Activated CD4-positive, alpha-beta T cell treated with anti-CD3 and anti-CD28 coated beads, Interleukin-2, amount 10 ng/mL, durations not matched to agents 24 days and 14 days (primary cell): ENCODE measurements at regions of chr11 and their contacts with region 1.

Region 1: DNA sequence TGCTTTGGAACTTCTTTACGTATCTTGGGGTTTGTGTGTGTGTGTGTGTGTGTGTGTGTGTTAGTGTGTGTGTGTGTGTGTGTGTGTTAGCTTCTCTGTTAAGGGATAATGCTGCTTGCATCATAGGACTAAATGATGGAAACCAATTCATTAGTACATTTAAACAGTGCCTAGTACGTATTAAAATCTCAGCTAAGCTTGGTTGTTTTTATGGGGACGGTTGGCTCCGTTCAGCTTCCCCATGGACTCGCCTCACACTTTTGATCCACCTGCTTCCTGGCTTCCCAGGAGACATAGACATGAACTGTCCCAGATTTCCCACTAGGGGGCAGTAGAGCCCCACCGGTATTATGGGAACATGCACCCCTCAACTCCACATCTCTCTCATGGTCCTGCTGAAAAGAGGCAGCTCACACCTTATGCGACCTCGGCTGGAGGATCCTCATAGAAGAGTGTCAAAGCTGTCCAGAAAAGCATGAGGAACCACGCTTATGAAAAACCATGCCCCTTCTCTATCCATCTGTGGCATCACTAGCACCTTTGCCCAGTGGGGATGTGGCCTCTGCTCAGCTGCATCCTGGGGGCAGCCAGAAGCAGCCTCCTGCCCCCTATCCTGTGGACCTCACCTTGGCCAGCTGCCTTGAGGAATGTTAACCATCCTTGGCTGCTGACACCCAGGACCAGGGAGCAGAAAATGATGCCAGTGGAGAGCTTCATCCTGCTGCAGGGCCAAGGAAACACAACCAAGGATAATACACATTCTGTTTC is 9.7 kb upstream of the SAAL1 start:
- DNase-seq: peak; percentile 89
- H3K4me3 Mint-ChIP-seq: no peak overlapping the region
- H3K27ac Mint-ChIP-seq: no peak overlapping the region
- H3K4me1 Mint-ChIP-seq: no peaks in the 10 kb centered on the region
- H3K27me3 Mint-ChIP-seq: peaks cover 32% of the 10 kb centered on the region

Region 2: DNA sequence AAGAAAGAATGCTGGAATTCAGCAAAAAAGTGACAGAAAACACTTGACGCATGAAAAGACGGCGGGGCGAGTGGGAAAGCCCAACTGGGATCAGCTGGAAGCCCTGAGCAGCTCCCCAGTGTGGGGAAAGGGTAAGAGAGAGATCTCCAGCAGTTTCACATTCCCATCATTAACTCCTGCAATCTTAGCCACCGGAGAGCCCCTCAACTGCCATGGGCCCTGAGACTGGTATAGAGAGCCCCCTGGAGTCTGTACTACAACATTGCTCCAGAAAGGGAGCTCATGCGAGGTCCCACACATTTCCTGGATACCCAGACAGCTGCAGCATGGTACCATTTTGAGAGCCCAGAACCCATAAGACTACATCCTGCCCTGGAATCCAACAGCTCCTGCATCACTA is 88.2 kb after region 1 on chr11:
- intact Hi-C with region 1: loop called (anchors 10 kb)
- DNase-seq: no peak
- H3K4me3 Mint-ChIP-seq: no peak overlapping the region
- H3K27ac Mint-ChIP-seq: no peak overlapping the region
- H3K4me1 Mint-ChIP-seq: peaks cover 3% of the 10 kb centered on the region
- H3K27me3 Mint-ChIP-seq: peaks cover 51% of the 10 kb centered on the region

Region 3: DNA sequence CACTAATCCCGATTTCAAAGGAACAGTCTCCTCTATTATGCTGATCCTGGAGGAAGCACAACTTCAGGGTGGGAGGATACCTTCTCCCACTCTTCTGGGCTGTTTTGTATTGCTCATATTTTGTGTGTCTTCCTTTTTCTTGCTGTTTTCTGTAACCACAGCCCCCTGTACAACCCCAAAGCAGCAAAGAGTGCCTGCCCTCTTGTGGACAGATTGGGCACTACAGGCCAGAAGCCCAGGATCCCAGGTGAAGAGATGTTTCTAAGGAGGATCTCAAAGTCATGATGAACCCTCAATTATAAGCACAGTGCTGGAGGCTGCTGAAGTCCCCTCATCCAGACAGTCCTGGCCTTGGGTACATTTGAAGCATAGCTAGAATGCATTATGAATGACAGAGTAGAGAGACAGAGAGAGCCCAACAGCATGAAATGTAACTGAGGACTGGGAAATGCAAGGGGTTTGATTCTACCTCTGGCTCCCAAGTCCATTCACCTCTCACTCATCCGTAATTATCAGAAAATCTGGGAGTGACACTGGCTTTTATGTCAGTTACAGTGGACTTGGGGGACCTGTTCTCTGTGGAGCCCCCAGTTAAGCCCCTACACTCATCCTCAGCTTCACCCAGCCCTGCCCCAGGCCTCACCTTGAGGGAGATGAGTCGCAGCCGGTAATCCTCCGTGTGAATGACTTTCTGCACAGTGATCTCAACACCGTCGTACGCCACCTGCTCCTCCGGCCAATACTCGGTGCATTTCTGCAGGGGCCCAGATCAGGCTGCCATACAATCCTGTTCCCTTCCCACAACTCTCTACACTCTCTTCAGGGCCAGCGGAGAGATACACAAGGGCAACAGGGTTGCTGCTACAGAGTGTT is 616.6 kb after region 1 on chr11:
- intact Hi-C with region 1: loop called (anchors 5 kb)
- DNase-seq: peak; percentile 90
- H3K4me3 Mint-ChIP-seq: no peak overlapping the region
- H3K27ac Mint-ChIP-seq: no peak overlapping the region
- H3K4me1 Mint-ChIP-seq: peaks cover 3% of the 10 kb centered on the region
- H3K27me3 Mint-ChIP-seq: peaks cover 4% of the 10 kb centered on the region

Region 4: DNA sequence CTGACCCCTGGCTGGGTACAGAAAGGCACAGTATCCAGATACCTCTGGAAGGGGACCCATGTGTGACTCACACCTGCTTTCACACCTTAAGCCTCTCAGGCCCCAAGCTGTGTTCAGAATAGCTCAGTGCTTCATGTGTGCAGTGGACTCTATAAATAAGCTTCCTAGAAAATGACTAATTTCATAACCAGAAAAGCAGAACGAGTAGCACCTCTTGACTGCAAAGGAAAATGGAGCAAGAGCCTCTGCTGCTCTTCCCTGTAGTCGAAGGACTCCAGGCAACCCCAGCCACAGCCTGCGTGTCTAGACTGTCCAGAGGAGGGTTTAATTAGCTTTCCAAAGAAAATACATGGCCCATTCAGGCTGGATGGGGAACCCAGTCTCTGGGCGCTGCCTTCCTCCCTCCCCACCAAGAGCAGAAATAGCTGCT is 652.9 kb after region 1 on chr11:
- intact Hi-C with region 1: loop called (anchors 10 kb)
- DNase-seq: no peak
- H3K4me3 Mint-ChIP-seq: no peak overlapping the region
- H3K27ac Mint-ChIP-seq: no peak overlapping the region
- H3K4me1 Mint-ChIP-seq: peaks cover 22% of the 10 kb centered on the region
- H3K27me3 Mint-ChIP-seq: peaks cover 7% of the 10 kb centered on the region

Region 5: GRCh38 chr11:18802381-18803257 is 687.1 kb after region 1 on chr11:
- intact Hi-C with region 1: loop called (anchors 1 kb)
- DNase-seq: peak; percentile 78
- H3K4me3 Mint-ChIP-seq: no peak overlapping the region
- H3K27ac Mint-ChIP-seq: no peak overlapping the region
- H3K4me1 Mint-ChIP-seq: no peaks in the 10 kb centered on the region
- H3K27me3 Mint-ChIP-seq: peaks cover 40% of the 10 kb centered on the region